ENCODE measurements at regions of chr13 and their contacts with region 1.

Region 1: DNA sequence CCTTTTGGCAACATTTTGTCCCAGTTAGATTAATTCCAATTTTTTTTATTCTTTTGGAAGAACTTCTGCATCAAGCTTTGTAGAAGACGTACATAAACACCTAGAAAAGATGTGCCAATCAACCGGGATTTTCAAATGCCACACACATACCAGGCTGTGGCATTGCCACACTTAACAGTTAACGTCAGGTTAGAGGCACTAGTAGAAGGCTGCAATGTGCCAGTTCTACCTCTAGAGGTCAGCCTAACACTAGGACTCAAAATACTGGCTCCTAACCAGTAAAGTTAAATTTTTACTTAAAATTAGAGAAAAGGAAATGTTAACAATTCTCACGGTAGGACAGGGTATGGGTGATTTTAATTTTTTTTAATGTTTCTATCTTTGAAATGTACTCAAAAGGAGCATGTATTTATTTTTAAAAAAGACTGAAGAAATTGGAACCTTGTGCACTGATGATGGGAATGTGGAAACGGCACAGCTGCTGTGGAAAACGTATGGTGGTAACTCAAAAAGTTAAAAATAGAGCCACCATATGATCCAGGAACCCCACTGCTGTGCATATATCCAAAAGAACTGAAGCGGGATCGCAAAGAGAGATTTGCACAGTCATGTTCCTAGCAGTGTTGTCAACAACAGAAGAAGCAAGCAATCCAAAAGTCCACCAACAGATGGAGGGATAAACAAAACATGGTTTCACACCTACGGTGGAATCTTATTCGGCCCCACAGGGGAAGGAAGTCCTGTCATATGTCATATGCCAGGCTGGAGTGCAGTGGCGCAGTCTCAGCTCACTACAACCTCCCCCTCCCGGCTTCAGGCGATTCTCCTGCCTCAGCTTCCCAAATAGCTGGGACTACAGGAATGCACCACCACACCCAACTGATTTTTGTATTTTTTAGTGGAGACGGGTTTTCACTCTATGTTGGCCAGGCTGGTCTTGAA is 30.3 kb downstream of the CRYL1 start:
- DNase-seq: peak in 3 of 5 donors; percentile 36 to 52 (median 41)
- ATAC-seq: peak; percentile 49 to 81 (median 78)
- H3K4me3 ChIP-seq: peak overlapping the region in 6 of 12 donors; percentile 11 to 41 (median 24)
- H3K27ac ChIP-seq: peak overlapping the region in 3 of 12 donors; percentile 9 to 45 (median 42)
- H3K4me1 ChIP-seq: peaks cover 0 to 14% (median 4%) of the 10 kb centered on the region in 12 donors
- H3K27me3 ChIP-seq: no peaks in the 10 kb centered on the region
- CTCF ChIP-seq: peak; percentile 91 to 99 (median 96)
- POLR2A ChIP-seq: no peak

Region 2: GRCh38 chr13:20192158-20192835 is 303.1 kb before region 1 on chr13:
- intact Hi-C with region 1: loop called in 4 of 10 experiments (anchors 2 to 10 kb)
- DNase-seq: no peak
- ATAC-seq: peak in 1 of 4 donors; percentile 8
- H3K4me3 ChIP-seq: peak overlapping the region; percentile 49 to 72 (median 59)
- H3K27ac ChIP-seq: no peak overlapping the region
- H3K4me1 ChIP-seq: peaks cover 5 to 30% (median 19%) of the 10 kb centered on the region in 12 donors
- H3K27me3 ChIP-seq: peaks cover 22 to 63% (median 30%) of the 10 kb centered on the region in 9 donors
- CTCF ChIP-seq: no peak
- POLR2A ChIP-seq: no peak

Region 3: GRCh38 chr13:20197361-20197834 is 298.0 kb before region 1 on chr13:
- intact Hi-C with region 1: loop called in 4 of 10 experiments (anchors 2 to 10 kb)
- DNase-seq: no peak
- ATAC-seq: peak in 2 of 4 donors; percentile 44 to 45
- H3K4me3 ChIP-seq: no peak overlapping the region
- H3K27ac ChIP-seq: no peak overlapping the region
- H3K4me1 ChIP-seq: peaks cover 5 to 22% (median 15%) of the 10 kb centered on the region in 12 donors
- H3K27me3 ChIP-seq: peaks cover 16 to 47% (median 29%) of the 10 kb centered on the region in 9 donors
- CTCF ChIP-seq: peak; percentile 56 to 77 (median 70)
- POLR2A ChIP-seq: no peak

Region 4: DNA sequence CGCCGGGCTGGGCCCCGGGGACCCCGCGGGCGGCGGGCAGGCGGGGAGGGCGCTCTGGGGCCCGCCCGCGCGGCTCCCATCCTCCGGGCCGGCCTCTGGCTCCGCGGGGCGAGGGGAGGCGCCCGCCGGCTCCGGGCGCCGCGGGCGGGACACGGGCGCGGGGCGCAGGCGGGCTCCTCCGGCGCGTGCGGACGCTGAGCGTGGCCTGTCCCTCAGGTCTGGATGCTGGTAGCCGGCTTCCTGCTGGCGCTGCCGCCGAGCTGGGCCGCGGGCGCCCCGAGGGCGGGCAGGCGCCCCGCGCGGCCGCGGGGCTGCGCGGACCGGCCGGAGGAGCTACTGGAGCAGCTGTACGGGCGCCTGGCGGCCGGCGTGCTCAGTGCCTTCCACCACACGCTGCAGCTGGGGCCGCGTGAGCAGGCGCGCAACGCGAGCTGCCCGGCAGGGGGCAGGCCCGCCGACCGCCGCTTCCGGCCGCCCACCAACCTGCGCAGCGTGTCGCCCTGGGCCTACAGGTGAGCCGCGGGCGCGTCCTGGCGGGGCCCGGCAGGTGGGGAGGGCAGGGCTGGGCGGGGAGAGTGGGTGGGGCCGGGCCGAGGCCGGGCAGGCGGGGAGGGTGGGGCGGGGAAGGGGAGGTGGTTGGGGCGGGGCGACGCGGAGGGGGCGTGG is 208.6 kb after region 1 on chr13:
- intact Hi-C with region 1: loop called in 7 of 10 experiments (anchors 5 to 10 kb)
- DNase-seq: peak; percentile 67 to 87 (median 79)
- ATAC-seq: peak; percentile 71 to 91 (median 85)
- H3K4me3 ChIP-seq: peak overlapping the region in 11 of 12 donors; percentile 16 to 74 (median 58)
- H3K27ac ChIP-seq: peak overlapping the region in 2 of 12 donors; percentile 34 to 63
- H3K4me1 ChIP-seq: peaks cover 0 to 17% (median 5%) of the 10 kb centered on the region in 12 donors
- H3K27me3 ChIP-seq: peaks cover 0 to 25% (median 0%) of the 10 kb centered on the region in 9 donors
- CTCF ChIP-seq: peak; percentile 7 to 66 (median 42)
- POLR2A ChIP-seq: no peak

Region 5: GRCh38 chr13:20713751-20714150 is 218.4 kb after region 1 on chr13:
- intact Hi-C with region 1: loop called in 9 of 10 experiments (anchors 5 to 10 kb)
- DNase-seq: peak in 2 of 5 donors; percentile 59 to 63
- ATAC-seq: peak in 2 of 4 donors; percentile 49 to 56
- H3K4me3 ChIP-seq: peak overlapping the region in 3 of 12 donors; percentile 7 to 32 (median 14)
- H3K27ac ChIP-seq: peak overlapping the region in 11 of 12 donors; percentile 36 to 92 (median 65)
- H3K4me1 ChIP-seq: peaks cover 0 to 41% (median 19%) of the 10 kb centered on the region in 12 donors
- H3K27me3 ChIP-seq: no peaks in the 10 kb centered on the region
- CTCF ChIP-seq: no peak
- POLR2A ChIP-seq: no peak

Region 6: GRCh38 chr13:20828539-20829364 is 333.4 kb after region 1 on chr13:
- intact Hi-C with region 1: loop called in 8 of 10 experiments (anchors 1 to 10 kb)
- DNase-seq: peak in 2 of 5 donors; percentile 30
- ATAC-seq: peak in 3 of 4 donors; percentile 30 to 40 (median 39)
- H3K4me3 ChIP-seq: peak overlapping the region in 9 of 12 donors; percentile 22 to 53 (median 34)
- H3K27ac ChIP-seq: peak overlapping the region in 11 of 12 donors; percentile 9 to 69 (median 50)
- H3K4me1 ChIP-seq: peaks cover 0 to 40% (median 8%) of the 10 kb centered on the region in 12 donors
- H3K27me3 ChIP-seq: no peaks in the 10 kb centered on the region
- CTCF ChIP-seq: peak; percentile 61 to 89 (median 81)
- POLR2A ChIP-seq: no peak

Region 7: GRCh38 chr13:20924758-20925394 is 429.5 kb after region 1 on chr13:
- intact Hi-C with region 1: loop called (anchors 1 to 10 kb)
- DNase-seq: peak in 4 of 5 donors; percentile 67 to 85 (median 70)
- ATAC-seq: peak in 3 of 4 donors; percentile 53 to 71 (median 56)
- H3K4me3 ChIP-seq: no peak overlapping the region
- H3K27ac ChIP-seq: no peak overlapping the region
- H3K4me1 ChIP-seq: no peaks in the 10 kb centered on the region
- H3K27me3 ChIP-seq: no peaks in the 10 kb centered on the region
- CTCF ChIP-seq: peak; percentile 59 to 85 (median 78)
- POLR2A ChIP-seq: no peak